Heart left ventricle (tissue), 16 donors: ENCODE measurements at regions of chr2 and their contacts with region 1.

Region 1: DNA sequence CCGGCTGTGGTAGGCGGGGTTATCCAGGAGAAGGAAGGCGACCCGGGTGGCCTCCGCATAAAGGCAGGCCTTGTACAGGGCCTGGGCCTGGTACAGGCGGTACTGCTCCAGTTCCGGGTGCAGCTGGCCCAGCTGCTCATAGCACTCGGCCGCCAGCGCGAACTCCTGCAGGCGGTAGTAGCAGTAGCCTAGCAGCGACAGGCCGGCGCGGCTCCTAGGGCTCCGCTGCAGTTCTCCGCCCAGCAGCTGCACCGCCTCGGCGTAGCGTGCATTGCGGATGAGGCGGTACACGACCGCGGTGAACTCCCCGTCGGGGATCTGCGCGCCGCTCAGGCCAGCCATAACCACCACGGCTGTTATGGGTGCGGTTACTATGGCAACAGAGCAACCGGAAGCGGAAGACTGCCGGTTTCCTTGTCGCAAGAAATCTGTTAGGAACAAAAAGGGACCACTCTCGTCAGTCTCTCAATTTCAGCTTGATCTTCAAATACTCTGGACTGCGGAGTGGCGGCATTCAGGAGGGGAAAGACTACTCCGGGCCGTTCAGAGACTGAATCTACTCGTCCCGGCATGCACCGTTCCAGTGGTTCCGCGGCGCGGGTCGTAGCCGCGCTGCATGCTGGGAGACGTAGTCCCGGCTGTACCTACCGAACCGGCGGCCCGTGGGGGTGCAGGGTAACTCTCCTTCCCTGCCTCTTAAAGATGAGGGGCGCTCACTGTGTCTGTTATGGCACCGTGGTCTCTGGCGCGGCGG is 160.0 kb downstream of the AGPS start:
- DNase-seq: peak; percentile 87 to 92 (median 90)
- ATAC-seq: peak; percentile 97 to 99 (median 98)
- H3K4me3 ChIP-seq: peak overlapping the region; percentile 66 to 96 (median 84)
- H3K27ac ChIP-seq: peak overlapping the region; percentile 89 to 99 (median 96)
- H3K4me1 ChIP-seq: peaks cover 0 to 16% (median 4%) of the 10 kb centered on the region in 12 donors
- H3K27me3 ChIP-seq: no peaks in the 10 kb centered on the region
- CTCF ChIP-seq: peak in 2 of 12 donors; percentile 5 to 6
- POLR2A ChIP-seq: no peak

Region 2: GRCh38 chr2:177429688-177430325 is 122.8 kb before region 1 on chr2:
- intact Hi-C with region 1: no loop called
- DNase-seq: no peak
- ATAC-seq: peak in 2 of 4 donors; percentile 59 to 65
- H3K4me3 ChIP-seq: no peak overlapping the region
- H3K27ac ChIP-seq: no peak overlapping the region
- H3K4me1 ChIP-seq: peaks cover 0 to 8% (median 0%) of the 10 kb centered on the region in 12 donors
- H3K27me3 ChIP-seq: no peaks in the 10 kb centered on the region
- CTCF ChIP-seq: no peak
- POLR2A ChIP-seq: no peak

Region 3: GRCh38 chr2:177598326-177599138 is 45.9 kb after region 1 on chr2:
- intact Hi-C with region 1: loop called in 3 of 10 experiments (anchors 5 kb)
- DNase-seq: peak in 3 of 5 donors; percentile 54 to 59 (median 56)
- ATAC-seq: peak; percentile 57 to 87 (median 78)
- H3K4me3 ChIP-seq: peak overlapping the region in 2 of 12 donors; percentile 27 to 31
- H3K27ac ChIP-seq: peak overlapping the region in 7 of 12 donors; percentile 10 to 51 (median 22)
- H3K4me1 ChIP-seq: peaks cover 3 to 22% (median 19%) of the 10 kb centered on the region in 12 donors
- H3K27me3 ChIP-seq: no peaks in the 10 kb centered on the region
- CTCF ChIP-seq: peak in 2 of 12 donors; percentile 23 to 36
- POLR2A ChIP-seq: no peak

Region 4: DNA sequence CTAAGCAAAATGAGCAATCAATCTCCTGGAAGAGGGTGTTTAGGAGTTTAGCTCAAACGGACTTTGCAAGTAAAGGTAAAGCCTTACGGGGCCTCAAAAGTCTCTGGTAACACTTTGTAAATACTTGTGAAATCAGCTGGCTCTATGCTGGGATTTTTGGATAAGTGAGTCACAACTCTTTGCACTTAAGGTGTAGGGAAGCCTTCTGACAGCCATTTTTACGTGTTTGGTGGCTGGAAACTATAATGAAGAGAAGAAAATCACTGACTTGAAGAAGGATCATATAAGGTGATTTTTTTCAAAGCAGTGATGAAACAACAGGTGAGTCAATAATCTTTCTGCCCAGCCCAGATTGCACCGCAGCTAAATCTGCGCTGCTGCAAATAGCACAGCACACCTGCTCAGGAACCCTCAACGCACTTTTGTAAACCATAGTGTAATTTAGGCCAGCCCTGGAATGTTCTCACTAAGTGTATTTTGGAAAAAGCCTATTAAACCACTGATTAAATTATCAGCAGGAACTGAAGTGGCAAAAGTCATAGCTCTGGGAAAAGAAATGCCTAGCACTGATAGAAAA is 58.8 kb after region 1 on chr2:
- intact Hi-C with region 1: loop called in 1 of 10 experiments (anchors 5 kb)
- DNase-seq: no peak
- ATAC-seq: no peak
- H3K4me3 ChIP-seq: no peak overlapping the region
- H3K27ac ChIP-seq: no peak overlapping the region
- H3K4me1 ChIP-seq: peaks cover 0 to 5% (median 0%) of the 10 kb centered on the region in 12 donors
- H3K27me3 ChIP-seq: no peaks in the 10 kb centered on the region
- CTCF ChIP-seq: no peak
- POLR2A ChIP-seq: no peak

Region 5: GRCh38 chr2:177618255-177619253 is 66.0 kb after region 1 on chr2:
- intact Hi-C with region 1: loop called in 3 of 10 experiments (anchors 1 to 5 kb)
- DNase-seq: peak; percentile 91 to 96 (median 93)
- ATAC-seq: peak; percentile 96 to 99 (median 98)
- H3K4me3 ChIP-seq: peak overlapping the region; percentile 62 to 94 (median 72)
- H3K27ac ChIP-seq: peak overlapping the region; percentile 92 to 100 (median 97)
- H3K4me1 ChIP-seq: peaks cover 0 to 19% (median 7%) of the 10 kb centered on the region in 12 donors
- H3K27me3 ChIP-seq: no peaks in the 10 kb centered on the region
- CTCF ChIP-seq: no peak
- POLR2A ChIP-seq: peak in 1 of 2 donors; percentile 50